A673 (cell line): ENCODE measurements at regions of chr9 and their contacts with region 1.

Region 1: GRCh38 chr9:113876151-113876992 is at the start of gene ZNF618:
- DNase-seq: peak; percentile 62
- H3K4me3 ChIP-seq: peak within 1 kb of the TSS; percentile 94
- H3K27ac ChIP-seq: peak within 1 kb of the TSS; percentile 93
- H3K4me1 ChIP-seq: peaks cover 14% of the 10 kb centered on the region
- H3K27me3 ChIP-seq: no peaks in the 10 kb centered on the region
- CTCF ChIP-seq: peak; percentile 74
- total RNA-seq, gene ZNF618: 29.4 and 36.5 TPM in 2 replicates

Region 2: DNA sequence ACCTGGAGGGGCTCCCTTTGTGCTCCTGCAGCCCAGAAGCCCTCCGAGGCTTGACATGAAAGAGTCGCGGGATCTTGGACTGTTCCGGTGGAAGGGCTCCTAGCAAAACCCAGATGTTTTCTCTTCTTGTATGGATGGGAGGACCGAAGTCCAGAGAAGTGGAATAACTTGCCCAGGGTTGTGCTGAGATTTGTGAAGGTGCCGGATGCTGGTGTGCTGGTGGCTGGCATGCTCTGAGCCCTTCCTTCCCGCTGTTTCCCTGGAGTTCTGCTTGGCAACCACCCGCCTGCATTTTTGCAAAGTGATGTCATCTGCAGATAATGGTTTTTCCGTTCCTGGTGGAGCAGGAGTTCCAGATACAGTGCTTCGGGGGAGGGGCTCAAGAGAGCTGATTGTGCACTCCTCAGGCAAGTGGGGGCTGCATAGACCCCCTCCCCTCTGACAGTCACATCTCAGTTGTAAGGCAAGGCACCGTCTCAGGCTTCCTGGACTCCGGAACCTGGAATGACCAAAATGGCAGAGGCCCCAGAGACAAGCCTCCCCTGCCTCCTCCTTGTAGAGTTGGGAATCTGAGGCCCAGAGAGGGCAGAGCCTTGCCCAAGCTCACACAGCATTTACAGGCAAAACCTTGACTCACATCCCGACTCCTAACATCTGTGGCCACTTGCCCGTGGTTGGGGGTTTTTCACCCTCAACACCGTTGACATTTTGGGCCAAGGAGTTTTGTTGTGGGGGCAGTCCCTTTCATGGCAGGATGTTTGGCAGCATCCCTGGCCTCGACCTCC is 255.8 kb before region 1 on chr9:
- CTCF ChIA-PET with region 1: interaction called, 13 read pairs
- POLR2A ChIA-PET with region 1: no interaction called
- intact Hi-C with region 1: no loop called
- DNase-seq: peak; percentile 91
- H3K4me3 ChIP-seq: no peak overlapping the region
- H3K27ac ChIP-seq: peak overlapping the region; percentile 67
- H3K4me1 ChIP-seq: peaks cover 68% of the 10 kb centered on the region
- H3K27me3 ChIP-seq: no peaks in the 10 kb centered on the region
- CTCF ChIP-seq: no peak

Region 3: DNA sequence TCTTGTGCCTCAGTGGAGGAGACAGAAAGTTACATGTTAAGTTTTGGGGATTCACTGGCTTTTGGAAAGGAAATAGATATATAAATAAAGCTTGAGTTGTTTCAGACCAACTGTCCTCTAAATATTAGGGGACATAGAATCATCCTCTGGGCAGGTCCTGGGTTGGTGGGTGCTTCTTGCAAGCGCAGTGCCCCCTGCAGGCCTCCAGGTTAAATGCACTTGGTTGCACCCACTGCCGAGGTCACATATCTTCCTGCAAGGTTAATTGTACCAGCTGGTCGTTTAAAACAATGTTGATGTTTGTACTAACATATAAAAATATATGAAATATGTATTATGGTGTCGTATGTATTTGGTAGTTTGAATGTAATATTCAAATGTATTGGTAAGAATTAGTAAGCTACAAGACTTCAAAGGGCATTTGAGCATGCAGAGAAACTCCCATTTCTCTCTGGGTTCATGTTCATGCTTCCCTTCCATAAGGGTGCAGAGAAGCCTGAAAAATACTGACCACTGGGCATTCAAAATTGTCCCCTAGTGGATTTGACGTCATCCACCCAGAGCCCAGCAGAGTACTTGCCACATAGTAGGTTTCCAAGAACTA is 86.7 kb after region 1 on chr9:
- CTCF ChIA-PET with region 1: no interaction called
- POLR2A ChIA-PET with region 1: no interaction called
- intact Hi-C with region 1: loop called (anchors 5 kb)
- DNase-seq: peak; percentile 76
- H3K4me3 ChIP-seq: no peak overlapping the region
- H3K27ac ChIP-seq: peak overlapping the region; percentile 96
- H3K4me1 ChIP-seq: peaks cover 56% of the 10 kb centered on the region
- H3K27me3 ChIP-seq: no peaks in the 10 kb centered on the region
- CTCF ChIP-seq: peak; percentile 94